Activated T-helper 1 cell treated with anti-CD3 and anti-CD28 coated beads, Interleukin-12 subunit alpha, Interleukin-12 subunit beta, Interleukin-2, Interleukin-4 antibody, amounts not matched to agents 30 ng/mL and 10 ng/mL and 1 ng/mL, durations not matched to agents 14 hours and 24 hours and 36 hours (primary cell): ENCODE measurements at regions of chr6 and their contacts with region 1.

Region 1: DNA sequence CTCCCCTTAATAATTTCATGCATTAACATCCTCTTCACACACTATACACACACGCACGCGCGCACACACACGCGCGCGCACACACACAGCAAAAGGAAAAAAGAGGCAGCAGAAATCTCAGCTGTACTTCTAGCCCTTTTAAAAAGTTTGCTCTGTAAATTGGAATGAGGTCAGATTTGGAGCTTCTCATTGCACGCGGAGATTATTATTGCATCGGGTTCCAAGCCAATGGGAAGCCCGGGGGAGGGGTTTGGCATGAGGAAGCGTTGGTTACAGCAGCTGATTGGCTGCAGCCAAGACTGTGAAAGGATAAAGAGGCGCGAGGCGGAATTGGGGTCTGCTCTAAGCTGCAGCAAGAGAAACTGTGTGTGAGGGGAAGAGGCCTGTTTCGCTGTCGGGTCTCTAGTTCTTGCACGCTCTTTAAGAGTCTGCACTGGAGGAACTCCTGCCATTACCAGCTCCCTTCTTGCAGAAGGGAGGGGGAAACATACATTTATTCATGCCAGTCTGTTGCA is at the start of gene SOX4:
- DNase-seq: peak; percentile 51
- H3K4me3 Mint-ChIP-seq: peak within 1 kb of the TSS; percentile 87
- H3K27ac Mint-ChIP-seq: peak within 1 kb of the TSS; percentile 89
- H3K4me1 Mint-ChIP-seq: peaks cover 29% of the 10 kb centered on the region
- H3K27me3 Mint-ChIP-seq: peaks cover 46% of the 10 kb centered on the region
- total RNA-seq, gene SOX4: 1.2 and 1.5 TPM in 2 replicates

Region 2: GRCh38 chr6:20148433-20148832 is 1445.0 kb before region 1 on chr6:
- intact Hi-C with region 1: no loop called
- DNase-seq: no peak
- H3K4me3 Mint-ChIP-seq: no peak overlapping the region
- H3K27ac Mint-ChIP-seq: no peak overlapping the region
- H3K4me1 Mint-ChIP-seq: no peaks in the 10 kb centered on the region
- H3K27me3 Mint-ChIP-seq: no peaks in the 10 kb centered on the region

Region 3: DNA sequence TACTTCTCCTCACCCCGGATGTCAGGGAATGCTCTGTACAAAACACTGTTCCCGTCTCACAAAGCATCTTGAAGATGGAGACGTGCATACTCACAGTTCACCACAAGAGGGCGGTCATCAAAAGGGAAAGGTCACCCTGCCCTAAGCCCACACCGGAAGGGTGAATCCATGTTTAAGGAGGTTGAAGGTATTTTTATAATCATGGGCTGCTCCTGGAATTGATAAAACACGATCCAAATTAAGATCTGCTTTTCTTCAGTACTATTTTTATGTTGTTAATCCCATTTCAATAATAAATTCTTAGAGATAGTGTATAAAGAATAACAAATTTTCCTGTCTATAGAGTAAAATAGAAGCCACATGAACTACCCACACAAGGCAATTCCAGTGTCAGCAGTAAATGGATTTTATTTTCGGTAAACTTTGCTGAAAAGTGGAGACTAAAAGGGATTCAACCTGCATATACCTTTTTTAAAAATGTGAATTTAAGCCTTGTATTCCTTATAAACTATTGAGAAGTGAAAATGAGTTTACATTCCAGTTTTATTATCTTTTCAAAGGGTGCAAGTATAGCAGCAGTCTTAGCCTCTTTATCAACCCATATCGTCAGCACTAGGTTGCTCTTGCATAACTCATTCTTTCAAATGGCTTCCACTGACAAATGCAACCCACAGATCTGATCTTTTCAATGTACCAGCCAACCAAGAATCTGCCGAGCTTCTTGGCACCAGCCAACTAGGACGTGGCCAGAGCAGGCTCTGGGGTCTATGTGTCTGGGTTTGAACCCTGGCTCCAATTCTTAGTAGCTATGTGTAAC is 1301.5 kb before region 1 on chr6:
- intact Hi-C with region 1: loop called (anchors 2 kb)
- DNase-seq: peak; percentile 60
- H3K4me3 Mint-ChIP-seq: no peak overlapping the region
- H3K27ac Mint-ChIP-seq: no peak overlapping the region
- H3K4me1 Mint-ChIP-seq: peaks cover 41% of the 10 kb centered on the region
- H3K27me3 Mint-ChIP-seq: peaks cover 3% of the 10 kb centered on the region

Region 4: GRCh38 chr6:20564269-20564668 is 1029.2 kb before region 1 on chr6:
- intact Hi-C with region 1: loop called (anchors 1 kb)
- DNase-seq: no peak
- H3K4me3 Mint-ChIP-seq: no peak overlapping the region
- H3K27ac Mint-ChIP-seq: no peak overlapping the region
- H3K4me1 Mint-ChIP-seq: peaks cover 23% of the 10 kb centered on the region
- H3K27me3 Mint-ChIP-seq: no peaks in the 10 kb centered on the region

Region 5: GRCh38 chr6:21188505-21189223 is 404.8 kb before region 1 on chr6:
- intact Hi-C with region 1: loop called (anchors 10 kb)
- DNase-seq: no peak
- H3K4me3 Mint-ChIP-seq: no peak overlapping the region
- H3K27ac Mint-ChIP-seq: no peak overlapping the region
- H3K4me1 Mint-ChIP-seq: peaks cover 30% of the 10 kb centered on the region
- H3K27me3 Mint-ChIP-seq: no peaks in the 10 kb centered on the region

Region 6: DNA sequence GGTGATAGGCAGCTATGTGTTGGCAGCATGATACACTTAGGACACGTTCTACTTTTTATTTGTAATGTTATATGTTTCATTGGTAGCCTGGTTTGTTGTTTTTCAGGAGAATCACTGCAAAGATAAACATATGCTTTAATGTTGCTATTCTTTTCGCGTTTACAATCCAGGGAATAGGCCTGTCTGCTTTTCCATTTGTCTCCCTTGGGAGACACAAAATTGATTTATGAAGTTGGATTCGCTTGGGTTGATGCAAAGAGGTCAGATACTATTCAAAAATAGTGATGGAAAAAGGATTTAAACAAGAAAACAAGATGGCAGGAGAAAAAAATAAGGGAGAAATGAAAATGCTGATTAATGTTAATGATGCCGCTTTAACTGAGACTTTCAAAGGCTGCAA is 179.4 kb before region 1 on chr6:
- intact Hi-C with region 1: no loop called
- DNase-seq: no peak
- H3K4me3 Mint-ChIP-seq: no peak overlapping the region
- H3K27ac Mint-ChIP-seq: no peak overlapping the region
- H3K4me1 Mint-ChIP-seq: no peaks in the 10 kb centered on the region
- H3K27me3 Mint-ChIP-seq: peaks cover 12% of the 10 kb centered on the region

Region 7: DNA sequence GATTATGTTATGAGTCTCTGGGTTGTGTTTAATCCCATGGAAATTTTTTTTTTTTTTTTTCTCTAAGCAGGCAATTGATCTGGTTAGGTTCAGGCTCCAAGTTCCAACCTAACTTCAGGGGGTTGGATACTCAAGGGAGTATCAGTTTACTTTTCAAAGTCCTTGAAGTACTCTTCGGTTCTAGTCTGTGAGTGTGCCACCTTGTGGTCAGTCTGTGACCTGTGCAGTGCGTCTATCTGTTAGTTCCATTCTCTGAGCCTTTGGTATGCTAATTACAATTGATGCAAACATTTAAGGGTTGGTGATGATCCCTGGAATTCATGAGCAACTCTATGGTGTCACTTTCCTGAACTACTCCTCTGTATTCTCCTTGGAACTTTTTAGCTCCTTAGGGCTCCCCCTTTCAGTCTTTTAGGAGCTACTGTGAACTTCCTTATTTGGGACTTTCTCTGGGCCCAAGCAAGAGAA is 342.1 kb after region 1 on chr6:
- intact Hi-C with region 1: loop called (anchors 5 kb)
- DNase-seq: no peak
- H3K4me3 Mint-ChIP-seq: no peak overlapping the region
- H3K27ac Mint-ChIP-seq: no peak overlapping the region
- H3K4me1 Mint-ChIP-seq: peaks cover 6% of the 10 kb centered on the region
- H3K27me3 Mint-ChIP-seq: no peaks in the 10 kb centered on the region